IMR-90 (cell line): ENCODE measurements at regions of chr10 and their contacts with region 1.

Region 1: GRCh38 chr10:86486856-86487255 is 34.7 kb downstream of the WAPL start:
- DNase-seq: no peak
- ATAC-seq: no peak
- H3K4me3 ChIP-seq: no peak overlapping the region
- H3K27ac ChIP-seq: no peak overlapping the region
- H3K4me1 ChIP-seq: no peaks in the 10 kb centered on the region
- H3K27me3 ChIP-seq: no peaks in the 10 kb centered on the region
- CTCF ChIP-seq: no peak
- POLR2A ChIP-seq: no peak
- RAD21 ChIP-seq: no peak

Region 2: DNA sequence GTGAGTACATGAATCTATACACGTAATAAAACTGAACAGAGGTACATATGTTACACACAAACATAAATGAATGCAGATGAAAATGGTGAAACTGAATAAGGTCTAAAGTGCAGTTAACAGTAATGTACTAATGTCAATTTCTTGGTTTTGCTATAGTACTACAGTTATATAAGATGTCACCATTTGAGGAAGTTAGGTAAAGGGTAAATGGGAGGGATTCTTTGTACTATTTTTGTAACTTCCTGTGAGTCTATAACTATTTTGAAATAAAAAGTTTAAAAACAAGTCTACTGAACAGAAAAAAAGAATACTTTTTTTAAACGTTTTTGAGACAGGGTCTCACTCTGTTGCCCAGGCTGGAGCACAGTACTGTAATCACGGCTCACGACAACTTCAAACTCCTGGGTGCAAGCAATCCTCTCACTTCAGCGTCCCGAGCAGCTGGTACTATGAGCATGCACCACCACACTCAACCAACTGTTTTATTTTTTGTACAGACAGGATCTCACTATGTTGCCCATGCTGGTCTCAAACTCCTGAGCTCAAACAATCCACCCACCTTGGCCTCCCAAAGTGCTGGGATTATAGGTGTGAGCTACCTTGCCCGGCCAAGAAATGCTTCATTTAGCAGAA is 36.8 kb before region 1 on chr10:
- CTCF ChIA-PET with region 1: no interaction called
- POLR2A ChIA-PET with region 1: no interaction called
- dilution Hi-C with region 1: no loop called
- in situ Hi-C with region 1: no loop called
- intact Hi-C with region 1: loop called (anchors 5 kb)
- DNase-seq: no peak
- ATAC-seq: no peak
- H3K4me3 ChIP-seq: no peak overlapping the region
- H3K27ac ChIP-seq: no peak overlapping the region
- H3K4me1 ChIP-seq: peaks cover 5% of the 10 kb centered on the region
- H3K27me3 ChIP-seq: no peaks in the 10 kb centered on the region
- CTCF ChIP-seq: no peak
- POLR2A ChIP-seq: no peak
- RAD21 ChIP-seq: no peak